ENCODE measurements at regions of chr20 and their contacts with region 1.

Region 1: DNA sequence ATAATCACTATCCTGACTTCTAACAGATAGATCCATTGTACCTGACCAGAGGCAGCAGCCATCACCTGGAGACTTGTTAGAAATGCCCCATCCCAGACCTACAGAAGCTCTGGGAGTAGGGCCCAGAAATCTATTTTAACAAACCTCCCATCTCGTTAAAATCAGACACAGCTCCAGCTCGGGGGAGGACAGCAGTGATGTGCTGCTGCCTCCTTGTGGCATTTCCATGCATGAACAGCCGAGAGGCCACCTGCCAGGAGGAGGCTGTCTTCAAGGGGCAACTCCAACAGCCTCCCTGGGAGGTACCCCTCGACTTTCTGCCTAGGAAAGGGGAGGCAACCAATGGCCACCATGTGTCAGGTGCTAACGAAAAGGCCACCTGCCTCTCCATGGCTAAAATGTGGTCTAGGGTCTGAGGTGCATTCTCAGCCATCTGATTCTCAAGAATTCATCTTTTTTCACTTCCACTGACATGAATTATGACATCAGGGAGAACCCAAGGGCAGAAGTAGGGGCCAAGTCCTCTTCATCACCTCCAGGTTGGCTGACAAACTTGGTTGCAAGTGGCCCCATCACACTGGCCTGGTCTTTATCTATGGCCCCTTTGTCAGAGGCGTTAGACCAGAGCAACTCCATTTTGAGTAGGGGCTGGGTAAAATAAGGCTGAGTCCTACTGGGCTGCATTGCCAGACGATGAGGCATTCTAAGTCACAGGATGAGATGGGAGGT is 12.2 kb upstream of the KCNK15 start:
- DNase-seq: peak; percentile 55
- H3K4me3 ChIP-seq: no peak overlapping the region
- H3K27ac ChIP-seq: no peak overlapping the region
- H3K27me3 ChIP-seq: no peaks in the 10 kb centered on the region
- CTCF ChIP-seq: peak; percentile 93

Region 2: DNA sequence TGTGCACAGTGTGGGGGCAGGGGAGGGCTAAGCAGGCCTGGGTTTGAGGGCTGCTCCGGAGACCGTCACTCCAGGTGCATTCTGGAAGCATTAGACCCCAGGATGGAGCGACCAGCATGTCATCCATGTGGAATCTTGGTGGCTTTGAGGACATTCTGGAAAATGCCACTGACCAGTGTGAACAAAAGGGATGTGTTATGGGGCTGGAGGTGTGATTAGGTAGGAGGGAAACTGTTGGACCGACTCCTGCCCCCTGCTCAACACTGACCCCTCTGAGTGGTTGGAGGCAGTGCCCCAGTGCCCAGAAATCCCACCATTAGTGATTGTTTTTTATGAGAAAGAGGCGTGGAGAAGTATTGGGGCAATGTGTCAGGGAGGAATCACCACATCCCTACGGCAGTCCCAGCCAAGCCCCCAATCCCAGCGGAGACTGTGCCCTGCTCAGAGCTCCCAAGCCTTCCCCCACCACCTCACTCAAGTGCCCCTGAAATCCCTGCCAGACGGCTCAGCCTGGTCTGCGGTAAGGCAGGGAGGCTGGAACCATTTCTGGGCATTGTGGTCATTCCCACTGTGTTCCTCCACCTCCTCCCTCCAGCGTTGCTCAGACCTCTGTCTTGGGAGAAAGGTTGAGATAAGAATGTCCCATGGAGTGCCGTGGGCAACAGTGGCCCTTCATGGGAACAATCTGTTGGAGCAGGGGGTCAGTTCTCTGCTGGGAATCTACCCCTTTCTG is 301.8 kb before region 1 on chr20:
- in situ Hi-C with region 1: no loop called
- DNase-seq: no peak
- H3K4me3 ChIP-seq: no peak overlapping the region
- H3K27ac ChIP-seq: no peak overlapping the region
- H3K27me3 ChIP-seq: no peaks in the 10 kb centered on the region
- CTCF ChIP-seq: peak; percentile 16

Region 3: DNA sequence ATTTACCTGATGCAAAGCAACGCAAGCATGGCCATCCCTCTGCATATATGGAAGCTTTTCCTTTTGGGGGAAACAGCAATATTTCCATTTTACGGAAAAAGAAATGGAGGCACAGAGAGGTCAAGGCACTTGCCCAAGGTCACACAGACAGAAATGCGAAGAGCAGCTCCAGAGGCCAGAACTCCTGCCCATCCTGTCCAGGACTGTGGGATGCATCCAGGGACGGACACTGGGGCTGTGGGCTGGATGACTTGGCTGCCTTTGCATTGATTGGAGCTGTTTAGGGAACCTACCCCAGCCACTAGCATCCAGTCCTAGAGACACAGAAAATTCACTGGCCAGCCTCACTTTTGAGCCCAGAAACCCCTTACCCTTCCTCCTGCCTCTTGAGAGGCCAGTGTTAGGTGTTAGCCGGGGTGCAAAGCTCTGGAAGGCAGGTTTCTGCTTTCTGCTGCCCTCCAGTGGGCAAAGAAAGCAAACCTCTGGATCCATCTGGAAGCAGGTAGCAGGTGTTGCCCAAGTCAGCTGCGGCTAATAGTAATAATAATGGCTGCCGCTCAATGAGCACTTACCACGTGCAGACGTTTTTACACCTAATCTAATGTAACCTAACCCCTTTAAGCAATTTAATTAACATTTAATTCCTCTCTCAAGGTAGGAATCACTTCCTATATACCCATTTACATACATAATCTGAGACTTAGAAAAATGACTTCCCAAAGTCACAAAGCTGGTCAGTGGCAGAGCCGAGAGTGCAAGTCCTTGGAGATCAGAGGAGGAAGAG is 50.0 kb before region 1 on chr20:
- in situ Hi-C with region 1: loop called (anchors 5 kb)
- DNase-seq: no peak
- H3K4me3 ChIP-seq: no peak overlapping the region
- H3K27ac ChIP-seq: no peak overlapping the region
- H3K27me3 ChIP-seq: peaks cover 8% of the 10 kb centered on the region
- CTCF ChIP-seq: peak; percentile 68

Region 4: DNA sequence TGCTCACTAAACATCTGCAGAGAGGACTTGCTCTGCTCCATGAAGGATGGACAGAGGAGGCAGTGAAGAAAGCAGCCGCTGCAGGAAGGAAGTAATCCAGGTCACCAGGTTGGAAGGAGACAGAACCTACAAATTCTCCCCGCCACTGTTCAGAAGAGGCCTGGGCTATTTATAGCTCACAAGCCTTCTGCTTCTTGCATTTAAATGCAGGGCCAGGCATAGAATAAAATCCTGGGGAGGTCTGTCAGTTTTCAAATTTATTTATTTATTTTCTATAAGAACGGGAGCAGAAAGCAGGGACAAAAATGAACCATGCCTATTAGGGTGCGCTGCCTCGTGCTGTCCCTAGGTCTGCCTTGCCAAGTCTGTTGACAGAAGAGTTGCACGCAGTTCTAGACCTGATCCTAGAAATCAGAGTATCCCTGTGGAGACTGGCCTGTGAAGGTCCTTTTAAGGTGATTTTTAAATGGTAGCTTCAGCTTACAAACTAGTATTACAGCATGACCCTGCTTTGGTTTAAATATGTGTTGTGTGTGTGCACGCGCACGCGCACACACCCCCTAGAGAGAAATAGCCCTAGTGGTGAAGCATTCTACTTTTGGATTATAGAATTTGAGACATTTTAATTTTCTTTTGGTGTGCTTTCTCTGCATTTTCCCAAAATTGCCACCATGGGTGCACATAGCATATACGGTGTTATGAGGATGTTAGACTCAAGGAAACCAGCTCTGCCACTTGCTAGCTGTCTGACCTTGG is 57.3 kb after region 1 on chr20:
- in situ Hi-C with region 1: no loop called
- DNase-seq: no peak
- H3K4me3 ChIP-seq: no peak overlapping the region
- H3K27ac ChIP-seq: no peak overlapping the region
- H3K27me3 ChIP-seq: peaks cover 2% of the 10 kb centered on the region
- CTCF ChIP-seq: no peak

Measured in brain microvascular endothelial cell (primary cell).